Dendritic cell treated with granulocyte-macrophage colony-stimulating factor and Interleukin-4, amounts not matched to agents 40 ng/mL and 50 ng/mL, for 4 days (primary cell): ENCODE measurements at regions of chr9 and their contacts with region 1.

Region 1: GRCh38 chr9:25377039-25377438 is 301.2 kb downstream of the TUSC1 start:
- H3K4me3 Mint-ChIP-seq: no peak overlapping the region
- H3K27ac Mint-ChIP-seq: no peak overlapping the region
- H3K4me1 Mint-ChIP-seq: no peaks in the 10 kb centered on the region
- H3K27me3 Mint-ChIP-seq: no peaks in the 10 kb centered on the region

Region 2: DNA sequence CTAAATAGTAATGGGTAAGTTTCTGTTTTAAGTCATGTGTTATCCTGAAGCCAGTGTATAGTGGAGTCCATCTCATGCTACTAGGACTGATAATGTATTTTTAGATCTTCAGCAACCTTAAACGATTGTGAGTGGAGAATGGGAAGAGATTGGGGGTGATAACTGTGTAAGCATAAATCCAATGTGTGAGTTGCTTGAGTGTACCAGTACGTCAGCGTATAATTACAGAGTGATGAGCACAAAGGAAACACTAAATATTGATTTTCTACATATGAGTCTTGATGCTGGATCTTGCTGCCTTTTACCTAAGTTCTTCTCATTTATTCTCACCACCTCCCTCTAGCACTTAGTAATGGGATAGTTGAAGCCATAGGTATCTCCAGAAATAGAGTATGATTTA is 815.1 kb before region 1 on chr9:
- intact Hi-C with region 1: no loop called
- H3K4me3 Mint-ChIP-seq: no peak overlapping the region
- H3K27ac Mint-ChIP-seq: no peak overlapping the region
- H3K4me1 Mint-ChIP-seq: no peaks in the 10 kb centered on the region
- H3K27me3 Mint-ChIP-seq: no peaks in the 10 kb centered on the region

Region 3: GRCh38 chr9:25415718-25416117 is 38.7 kb after region 1 on chr9:
- intact Hi-C with region 1: no loop called
- H3K4me3 Mint-ChIP-seq: no peak overlapping the region
- H3K27ac Mint-ChIP-seq: no peak overlapping the region
- H3K4me1 Mint-ChIP-seq: no peaks in the 10 kb centered on the region
- H3K27me3 Mint-ChIP-seq: no peaks in the 10 kb centered on the region

Region 4: DNA sequence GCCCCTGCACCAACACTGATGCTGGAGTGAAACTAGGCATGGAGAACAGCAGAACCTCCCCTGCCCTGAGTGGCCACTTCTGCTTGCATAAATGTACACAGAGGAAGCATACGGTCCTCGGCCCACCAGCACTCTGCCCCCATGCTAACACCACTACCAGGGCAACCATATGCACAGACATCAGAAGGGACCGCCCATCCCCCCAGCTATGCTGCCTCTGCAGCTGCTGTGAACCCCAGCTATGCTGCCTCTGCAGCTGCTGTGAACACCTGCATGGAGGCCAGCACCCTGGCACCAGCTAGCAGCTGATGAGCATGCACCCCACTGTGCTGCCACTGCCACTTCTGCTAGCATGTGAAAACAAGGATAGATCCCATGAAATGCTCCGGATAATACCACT is 50.9 kb after region 1 on chr9:
- intact Hi-C with region 1: loop called (anchors 10 kb)
- H3K4me3 Mint-ChIP-seq: no peak overlapping the region
- H3K27ac Mint-ChIP-seq: no peak overlapping the region
- H3K4me1 Mint-ChIP-seq: no peaks in the 10 kb centered on the region
- H3K27me3 Mint-ChIP-seq: no peaks in the 10 kb centered on the region